Left colon (tissue), 2 donors: ENCODE measurements at regions of chr2 and their contacts with region 1.

Region 1: DNA sequence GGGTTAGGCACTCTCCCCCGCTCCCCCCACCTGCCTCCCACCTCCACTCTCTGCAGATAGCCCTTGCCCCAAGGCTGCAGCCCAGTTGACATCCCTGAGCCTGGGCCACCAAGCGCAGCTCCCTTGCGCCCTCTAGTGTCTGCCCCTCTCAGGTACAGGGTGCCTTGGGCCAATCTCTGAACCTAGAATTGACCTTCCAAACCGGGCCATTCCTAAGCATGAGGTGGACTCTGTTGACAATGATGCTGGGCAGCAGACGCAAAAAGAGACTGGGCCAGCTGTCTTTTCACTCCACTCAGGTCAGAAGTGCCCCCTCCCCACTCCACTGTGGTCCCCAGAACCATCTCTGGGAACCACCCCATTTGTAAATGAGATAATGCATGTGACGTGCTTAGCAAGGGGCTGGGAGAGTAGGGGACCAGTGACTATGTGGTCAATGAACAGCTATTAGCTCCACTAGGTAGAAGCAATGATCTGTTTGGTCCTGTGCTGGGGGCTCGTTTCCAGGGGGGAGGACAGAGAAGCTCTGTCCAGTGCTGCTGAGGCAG is 43.3 kb upstream of the PLB1 start:
- DNase-seq: peak; percentile 59 to 88
- ATAC-seq: peak; percentile 93

Region 2: DNA sequence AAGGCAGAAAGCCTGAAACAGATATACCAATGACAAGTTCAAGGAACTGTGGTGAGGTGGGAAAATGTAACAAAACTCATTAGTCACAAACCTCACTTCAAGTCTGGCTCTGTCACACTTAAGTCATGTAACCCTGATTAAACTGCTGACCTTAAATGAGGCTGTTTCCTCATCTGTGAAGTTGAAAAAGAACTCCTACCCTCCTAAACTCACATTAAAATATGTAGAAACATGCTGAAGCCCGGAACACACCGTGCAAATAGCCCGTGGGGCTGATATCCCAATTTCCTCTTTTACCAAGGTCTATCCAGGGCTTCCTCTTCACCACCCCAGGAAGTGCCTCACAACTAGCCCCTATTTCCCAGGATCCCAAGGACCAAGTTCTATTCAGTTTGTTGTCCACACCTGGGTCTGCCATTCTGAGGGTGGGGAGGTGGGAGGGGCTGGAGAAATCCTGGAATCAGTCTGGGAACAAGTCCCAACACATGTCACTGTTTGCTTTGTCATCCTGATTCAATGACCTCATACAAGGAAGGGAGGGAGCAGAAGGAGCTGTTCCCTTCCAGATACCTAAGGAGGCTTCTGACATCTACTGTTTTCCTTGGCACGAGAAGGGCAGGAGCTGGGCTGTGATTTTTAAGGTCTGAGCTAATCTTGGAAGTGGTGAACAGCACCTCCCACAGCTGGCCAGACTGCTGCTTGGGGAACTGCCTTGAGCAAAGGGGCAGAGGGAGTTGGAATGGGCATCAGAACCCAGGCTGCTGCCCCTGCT is 746.6 kb before region 1 on chr2:
- intact Hi-C with region 1: loop called in 1 of 2 experiments (anchors 5 kb)
- DNase-seq: peak; percentile 57 to 78
- ATAC-seq: peak; percentile 91

Region 3: GRCh38 chr2:27754138-27754588 is 698.4 kb before region 1 on chr2:
- intact Hi-C with region 1: loop called in 1 of 2 experiments (anchors 10 kb)
- DNase-seq: peak; percentile 84 to 86
- ATAC-seq: peak; percentile 93

Region 4: GRCh38 chr2:28577791-28578680 is 125.4 kb after region 1 on chr2:
- intact Hi-C with region 1: no loop called
- DNase-seq: no peak
- ATAC-seq: no peak